GM10248 (cell line): ENCODE measurements at regions of chr1 and their contacts with region 1.

Region 1: DNA sequence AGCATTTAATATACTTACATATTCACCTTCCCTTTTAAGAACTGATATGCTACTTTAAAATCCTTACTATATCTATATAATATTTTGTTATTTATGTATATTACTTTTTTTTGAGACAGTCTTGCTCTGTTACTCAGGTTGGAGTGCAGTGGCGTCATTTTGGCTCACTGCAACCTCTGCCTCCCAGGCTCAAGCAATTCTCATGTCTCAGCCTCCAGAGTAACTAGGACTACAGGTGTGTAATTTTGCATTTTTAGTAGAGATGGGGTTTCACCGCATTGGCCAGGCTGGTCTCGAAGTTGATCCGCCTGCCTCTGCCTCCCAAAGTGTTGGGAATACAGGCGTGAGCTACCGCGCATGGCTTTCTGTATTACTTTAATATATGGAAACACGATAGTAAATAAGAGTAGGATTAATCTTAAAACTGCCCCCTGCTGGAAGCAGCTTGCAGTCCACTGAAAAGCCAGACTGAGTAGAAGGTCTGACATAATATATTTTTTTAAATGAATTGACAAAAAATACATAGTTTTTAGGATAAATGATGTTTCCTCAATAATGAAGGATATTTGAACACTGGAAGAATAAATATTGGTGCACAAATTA is 24.4 kb downstream of the RCAN3 start:
- DNase-seq: peak; percentile 26
- CTCF ChIP-seq: peak; percentile 49

Region 2: GRCh38 chr1:24514946-24515345 is 12.1 kb before region 1 on chr1:
- CTCF ChIA-PET with region 1: interaction called, 22 read pairs
- POLR2A ChIA-PET with region 1: no interaction called
- DNase-seq: no peak
- CTCF ChIP-seq: no peak

Region 3: DNA sequence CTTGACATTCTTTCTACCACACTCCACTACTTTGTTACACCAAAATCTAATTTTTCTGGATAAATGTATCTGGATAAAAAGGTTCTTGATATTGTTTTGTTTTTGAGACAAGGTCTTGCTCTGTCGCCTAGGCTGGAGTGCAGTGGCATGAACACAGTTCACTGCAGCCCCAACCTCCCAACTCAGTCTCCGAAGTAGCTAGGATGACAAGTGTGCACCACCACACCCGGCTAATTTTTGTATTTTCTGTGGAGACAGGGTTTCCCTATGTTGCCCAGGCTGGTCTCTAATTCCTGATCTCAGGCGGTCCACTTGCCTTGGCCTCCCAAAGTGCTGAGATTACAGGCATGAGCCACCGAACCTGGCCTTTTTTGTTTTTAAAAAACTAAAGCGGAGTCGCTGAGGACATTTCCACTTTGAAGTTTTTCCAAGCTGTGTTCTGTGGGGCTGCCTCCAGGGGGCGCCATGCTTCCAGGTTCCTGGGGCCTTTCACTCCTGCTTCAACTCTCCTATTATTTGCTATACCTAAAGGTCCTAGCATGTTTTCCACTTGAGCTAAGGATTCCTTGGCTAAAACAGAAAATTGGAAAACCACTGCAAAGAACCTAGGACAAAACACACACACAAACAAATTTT is 14.8 kb after region 1 on chr1:
- CTCF ChIA-PET with region 1: interaction called, 10 read pairs
- POLR2A ChIA-PET with region 1: no interaction called
- DNase-seq: no peak
- CTCF ChIP-seq: peak; percentile 37

Region 4: DNA sequence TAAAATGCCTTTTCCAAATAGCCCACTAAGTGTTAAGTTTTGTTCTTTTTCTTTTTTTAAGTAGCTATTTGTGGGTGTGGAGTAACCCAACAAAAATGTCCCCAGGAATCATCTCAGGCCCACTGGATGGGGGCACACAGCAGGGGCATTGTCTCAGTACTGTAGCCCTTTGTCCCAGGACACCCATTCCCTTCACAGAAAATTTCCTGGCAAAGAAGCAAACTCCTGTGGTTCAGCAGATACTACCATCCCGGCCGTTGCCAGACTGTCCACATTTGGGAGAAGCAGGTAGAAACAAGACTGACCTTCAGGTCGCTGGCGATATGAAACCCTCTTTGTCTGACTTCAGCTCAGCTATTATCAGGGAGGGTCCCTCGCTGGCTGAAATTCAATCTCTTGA is 92.3 kb after region 1 on chr1:
- CTCF ChIA-PET with region 1: no interaction called
- POLR2A ChIA-PET with region 1: no interaction called
- DNase-seq: no peak
- CTCF ChIP-seq: no peak